ENCODE measurements at regions of chr16 and their contacts with region 1.

Region 1: DNA sequence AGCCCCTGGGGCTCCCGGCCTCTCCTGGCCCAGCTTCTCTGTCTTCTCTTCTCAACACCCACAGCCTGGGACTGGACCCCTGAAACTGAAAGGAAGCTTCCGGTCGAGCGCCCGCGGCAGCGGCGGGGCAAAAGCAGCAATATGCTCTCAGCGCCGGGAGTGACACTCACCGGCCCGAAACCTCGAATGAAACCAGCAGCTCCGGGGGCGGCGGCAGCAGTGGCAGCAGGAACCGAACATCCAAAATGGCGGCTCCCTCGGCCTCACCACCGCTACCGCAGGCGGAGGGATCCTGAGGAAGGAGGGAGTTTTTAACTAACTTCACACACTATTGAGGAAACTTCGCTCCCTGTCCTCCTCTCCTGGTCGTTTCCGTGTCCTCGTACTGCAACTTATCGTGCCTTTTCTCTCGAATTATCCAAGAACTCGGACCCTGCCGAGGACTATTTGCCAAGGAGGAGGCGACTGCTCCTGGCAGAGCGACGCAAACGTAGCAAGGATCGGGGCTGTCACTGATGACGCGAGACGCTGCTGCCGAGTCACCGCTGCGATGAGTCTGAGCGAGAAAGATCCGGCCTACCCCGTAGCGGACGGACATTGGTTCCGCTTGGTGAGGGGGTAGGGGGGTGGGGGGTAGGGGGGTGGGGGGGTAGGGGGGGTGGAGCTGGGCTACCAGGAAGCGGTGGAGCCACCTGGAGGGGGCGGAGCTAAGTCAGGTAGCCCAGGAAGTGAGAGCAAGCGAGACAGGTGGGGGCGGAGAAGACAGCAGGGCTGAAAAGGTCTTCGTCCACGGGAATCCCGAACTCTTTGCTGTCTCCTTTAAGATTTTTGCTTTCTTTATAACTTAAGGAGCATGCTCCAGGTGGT is at the start of gene AP1G1:
- DNase-seq: peak; percentile 97
- H3K4me3 Mint-ChIP-seq: peak within 1 kb of the TSS; percentile 94
- H3K27ac Mint-ChIP-seq: peak within 1 kb of the TSS; percentile 100
- H3K4me1 Mint-ChIP-seq: peaks cover 20% of the 10 kb centered on the region
- H3K27me3 Mint-ChIP-seq: no peaks in the 10 kb centered on the region
- total RNA-seq, gene AP1G1: 98.3 and 99.5 TPM in 2 replicates

Region 2: DNA sequence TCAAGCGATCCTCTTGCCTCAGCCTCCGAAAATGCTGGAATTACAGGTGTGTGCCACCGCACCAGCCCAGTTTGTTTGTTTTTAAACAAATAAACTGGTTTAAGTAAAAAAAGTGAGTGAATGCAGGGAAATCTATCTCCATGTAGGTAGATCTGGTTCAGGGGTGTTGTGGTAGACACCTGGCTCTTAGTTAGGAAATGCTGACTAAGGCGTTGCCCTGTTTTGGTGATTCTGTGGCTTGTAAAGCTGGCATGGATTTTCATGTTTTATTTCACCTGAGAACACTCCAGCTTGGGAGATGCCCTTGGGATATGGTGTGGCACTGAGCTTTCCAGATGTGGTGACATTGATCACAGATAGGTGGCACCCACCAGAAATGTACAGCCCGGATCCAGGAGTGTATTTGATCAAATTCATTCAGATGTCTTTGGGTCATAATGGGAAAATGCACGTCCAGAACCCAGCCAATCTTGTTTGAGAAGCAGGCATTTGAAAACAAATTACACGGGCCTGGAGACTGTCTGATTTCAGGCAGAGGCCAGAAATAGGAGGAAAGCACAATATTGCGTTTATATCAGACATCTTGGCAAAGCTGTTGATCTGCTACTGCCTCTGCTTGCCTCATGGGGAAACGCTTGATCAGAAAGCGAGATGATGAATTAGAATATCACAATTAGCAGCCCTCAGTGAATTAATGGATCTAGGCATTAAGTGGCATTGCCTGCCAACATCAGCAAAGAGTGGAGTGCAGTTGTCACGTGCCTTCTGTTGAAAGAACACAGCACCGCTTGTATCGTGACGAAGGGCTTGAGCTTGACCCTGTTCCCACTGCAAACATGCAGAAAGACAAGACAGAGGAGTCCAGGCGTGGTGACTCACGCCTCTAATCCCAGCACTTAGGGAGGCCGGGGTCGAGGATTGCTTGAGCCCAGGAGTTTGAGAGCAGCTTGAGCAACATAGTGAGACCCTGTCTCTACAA is 1169.7 kb before region 1 on chr16:
- intact Hi-C with region 1: no loop called
- DNase-seq: no peak
- H3K4me3 Mint-ChIP-seq: no peak overlapping the region
- H3K27ac Mint-ChIP-seq: no peak overlapping the region
- H3K4me1 Mint-ChIP-seq: no peaks in the 10 kb centered on the region
- H3K27me3 Mint-ChIP-seq: peaks cover 8% of the 10 kb centered on the region

Region 3: GRCh38 chr16:71564155-71564967 is 244.5 kb before region 1 on chr16:
- intact Hi-C with region 1: loop called (anchors 1 kb)
- DNase-seq: no peak
- H3K4me3 Mint-ChIP-seq: peak overlapping the region; percentile 87
- H3K27ac Mint-ChIP-seq: peak overlapping the region; percentile 91
- H3K4me1 Mint-ChIP-seq: peaks cover 15% of the 10 kb centered on the region
- H3K27me3 Mint-ChIP-seq: peaks cover 7% of the 10 kb centered on the region

Region 4: GRCh38 chr16:71758293-71758760 is 50.5 kb before region 1 on chr16:
- intact Hi-C with region 1: loop called (anchors 10 kb)
- DNase-seq: no peak
- H3K4me3 Mint-ChIP-seq: no peak overlapping the region
- H3K27ac Mint-ChIP-seq: no peak overlapping the region
- H3K4me1 Mint-ChIP-seq: peaks cover 4% of the 10 kb centered on the region
- H3K27me3 Mint-ChIP-seq: no peaks in the 10 kb centered on the region

Region 5: GRCh38 chr16:71845639-71846430 is 37.0 kb after region 1 on chr16 and contains the start of gene ATXN1L:
- intact Hi-C with region 1: loop called (anchors 1 kb)
- DNase-seq: peak; percentile 99
- H3K4me3 Mint-ChIP-seq: peak within 1 kb of the TSS; percentile 96
- H3K27ac Mint-ChIP-seq: peak within 1 kb of the TSS; percentile 97
- H3K4me1 Mint-ChIP-seq: peaks cover 45% of the 10 kb centered on the region
- H3K27me3 Mint-ChIP-seq: no peaks in the 10 kb centered on the region
- total RNA-seq, gene ATXN1L: 16.7 and 19.3 TPM in 2 replicates

Region 6: GRCh38 chr16:71894921-71895678 is 86.3 kb after region 1 on chr16 and contains the start of gene IST1:
- intact Hi-C with region 1: loop called (anchors 1 kb)
- DNase-seq: peak; percentile 99
- H3K4me3 Mint-ChIP-seq: peak within 1 kb of the TSS; percentile 95
- H3K27ac Mint-ChIP-seq: peak within 1 kb of the TSS; percentile 95
- H3K4me1 Mint-ChIP-seq: peaks cover 11% of the 10 kb centered on the region
- H3K27me3 Mint-ChIP-seq: peaks cover 1% of the 10 kb centered on the region
- total RNA-seq, gene IST1: 149 and 156 TPM in 2 replicates

Region 7: GRCh38 chr16:72008424-72009216 is 199.8 kb after region 1 on chr16 and contains the start of gene DHODH:
- intact Hi-C with region 1: loop called (anchors 2 kb)
- DNase-seq: peak; percentile 99
- H3K4me3 Mint-ChIP-seq: peak within 1 kb of the TSS; percentile 91
- H3K27ac Mint-ChIP-seq: peak within 1 kb of the TSS; percentile 93
- H3K4me1 Mint-ChIP-seq: peaks cover 22% of the 10 kb centered on the region
- H3K27me3 Mint-ChIP-seq: peaks cover 5% of the 10 kb centered on the region
- total RNA-seq, gene DHODH: 31.8 and 33.7 TPM in 2 replicates

Measured in activated CD4-positive, alpha-beta T cell treated with anti-CD3 and anti-CD28 coated beads, Interleukin-2, amount 10 ng/mL, durations not matched to agents 24 days and 14 days (primary cell).